Activated T-helper 1 cell treated with anti-CD3 and anti-CD28 coated beads, Interleukin-12 subunit alpha, Interleukin-12 subunit beta, Interleukin-2, Interleukin-4 antibody, amounts not matched to agents 30 ng/mL and 10 ng/mL and 1 ng/mL, durations not matched to agents 14 hours and 24 hours and 36 hours (primary cell): ENCODE measurements at regions of chr7 and their contacts with region 1.

Region 1: GRCh38 chr7:82017334-82017943 is 247.6 kb upstream of the HGF start:
- DNase-seq: no peak
- H3K4me3 Mint-ChIP-seq: no peak overlapping the region
- H3K27ac Mint-ChIP-seq: no peak overlapping the region
- H3K4me1 Mint-ChIP-seq: no peaks in the 10 kb centered on the region
- H3K27me3 Mint-ChIP-seq: no peaks in the 10 kb centered on the region

Region 2: GRCh38 chr7:81482600-81483186 is 534.7 kb before region 1 on chr7:
- intact Hi-C with region 1: loop called (anchors 5 kb)
- DNase-seq: no peak
- H3K4me3 Mint-ChIP-seq: no peak overlapping the region
- H3K27ac Mint-ChIP-seq: no peak overlapping the region
- H3K4me1 Mint-ChIP-seq: no peaks in the 10 kb centered on the region
- H3K27me3 Mint-ChIP-seq: no peaks in the 10 kb centered on the region